Activated B cell treated with CpG ODN at 0.5 μM for 24 hours (primary cell): ENCODE measurements at regions of chr1 and their contacts with region 1.

Region 1: DNA sequence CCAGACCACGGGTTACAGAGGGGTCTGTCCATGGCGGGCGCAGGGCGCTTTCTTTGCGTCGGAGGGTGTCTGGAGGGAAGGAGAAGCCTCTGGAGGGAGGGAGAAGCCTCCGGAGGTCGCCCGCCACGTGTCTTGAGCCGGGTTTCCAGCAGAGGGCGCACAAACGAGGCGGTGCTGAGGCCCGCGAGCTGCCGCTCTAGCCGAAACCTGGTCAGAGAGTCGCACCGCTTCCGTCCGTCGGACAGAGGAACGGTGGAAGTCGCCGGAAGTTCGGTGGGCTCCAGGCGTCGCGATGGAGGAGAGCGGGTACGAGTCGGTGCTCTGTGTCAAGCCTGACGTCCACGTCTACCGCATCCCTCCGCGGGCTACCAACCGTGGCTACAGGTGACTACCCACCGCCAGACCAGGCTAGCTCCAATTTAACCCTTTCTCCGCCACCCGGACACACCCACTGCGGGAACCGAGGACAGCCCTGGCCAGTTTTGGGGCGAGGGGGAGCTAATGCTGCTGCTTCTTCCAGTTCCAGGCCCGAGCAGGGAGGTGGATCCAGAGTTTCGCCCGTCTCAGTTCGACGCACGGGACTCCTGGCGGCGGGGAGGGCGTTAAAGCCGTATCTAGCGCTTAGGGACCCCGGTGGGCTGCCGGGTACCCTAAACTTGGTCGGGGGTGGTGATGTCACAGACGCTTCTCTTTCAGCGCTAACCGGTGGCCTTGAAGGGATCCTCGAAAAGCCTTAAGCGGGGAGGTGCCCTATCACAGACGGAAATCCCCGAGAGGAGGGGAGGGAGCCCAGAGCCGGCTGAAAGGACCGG is at the start of gene NECAP2:
- DNase-seq: peak; percentile 91
- ATAC-seq: peak; percentile 91
- H3K4me3 Mint-ChIP-seq: peak within 1 kb of the TSS; percentile 94
- H3K27ac Mint-ChIP-seq: peak within 1 kb of the TSS; percentile 91
- H3K4me1 Mint-ChIP-seq: peaks cover 30% of the 10 kb centered on the region
- H3K27me3 Mint-ChIP-seq: no peaks in the 10 kb centered on the region
- CTCF ChIP-seq: peak; percentile 92
- total RNA-seq, gene NECAP2: 85.5 and 88.4 TPM in 2 replicates

Region 2: GRCh38 chr1:16155532-16156410 is 284.9 kb before region 1 on chr1 and contains the start of gene EPHA2:
- CTCF ChIA-PET with region 1: no interaction called
- POLR2A ChIA-PET with region 1: no interaction called
- intact Hi-C with region 1: no loop called
- DNase-seq: no peak
- ATAC-seq: peak; percentile 35
- H3K4me3 Mint-ChIP-seq: peak within 1 kb of the TSS; percentile 72
- H3K27ac Mint-ChIP-seq: no peak within 1 kb of the TSS
- H3K4me1 Mint-ChIP-seq: peaks cover 30% of the 10 kb centered on the region
- H3K27me3 Mint-ChIP-seq: peaks cover 15% of the 10 kb centered on the region
- CTCF ChIP-seq: no peak
- total RNA-seq, gene EPHA2: not detected in 2 replicates

Region 3: GRCh38 chr1:16386454-16387113 is 54.1 kb before region 1 on chr1:
- CTCF ChIA-PET with region 1: interaction called, 8 read pairs
- POLR2A ChIA-PET with region 1: interaction called, 8 read pairs
- intact Hi-C with region 1: loop called (anchors 5 kb)
- DNase-seq: no peak
- ATAC-seq: peak; percentile 23
- H3K4me3 Mint-ChIP-seq: peak overlapping the region; percentile 73
- H3K27ac Mint-ChIP-seq: peak overlapping the region; percentile 92
- H3K4me1 Mint-ChIP-seq: peaks cover 79% of the 10 kb centered on the region
- H3K27me3 Mint-ChIP-seq: no peaks in the 10 kb centered on the region
- CTCF ChIP-seq: no peak

Region 4: GRCh38 chr1:16420424-16421118 is 20.1 kb before region 1 on chr1:
- CTCF ChIA-PET with region 1: interaction called, 6 read pairs
- POLR2A ChIA-PET with region 1: interaction called, 11 read pairs
- intact Hi-C with region 1: loop called (anchors 2 kb)
- DNase-seq: no peak
- ATAC-seq: peak; percentile 97
- H3K4me3 Mint-ChIP-seq: peak overlapping the region; percentile 48
- H3K27ac Mint-ChIP-seq: peak overlapping the region; percentile 84
- H3K4me1 Mint-ChIP-seq: peaks cover 31% of the 10 kb centered on the region
- H3K27me3 Mint-ChIP-seq: no peaks in the 10 kb centered on the region
- CTCF ChIP-seq: no peak

Region 5: GRCh38 chr1:16498573-16499413 is 58.1 kb after region 1 on chr1:
- CTCF ChIA-PET with region 1: no interaction called
- POLR2A ChIA-PET with region 1: interaction called, 6 read pairs
- intact Hi-C with region 1: loop called (anchors 10 kb)
- DNase-seq: peak; percentile 91
- ATAC-seq: peak; percentile 96
- H3K4me3 Mint-ChIP-seq: peak overlapping the region; percentile 85
- H3K27ac Mint-ChIP-seq: no peak overlapping the region
- H3K4me1 Mint-ChIP-seq: peaks cover 24% of the 10 kb centered on the region
- H3K27me3 Mint-ChIP-seq: no peaks in the 10 kb centered on the region
- CTCF ChIP-seq: no peak

Region 6: GRCh38 chr1:16613185-16614147 is 172.8 kb after region 1 on chr1 and contains the start of gene NBPF1:
- CTCF ChIA-PET with region 1: interaction called, 4 read pairs
- POLR2A ChIA-PET with region 1: interaction called, 3 read pairs
- intact Hi-C with region 1: loop called (anchors 2 kb)
- DNase-seq: peak; percentile 98
- ATAC-seq: peak; percentile 97
- H3K4me3 Mint-ChIP-seq: no peak within 1 kb of the TSS
- H3K27ac Mint-ChIP-seq: no peak within 1 kb of the TSS
- H3K4me1 Mint-ChIP-seq: no peaks in the 10 kb centered on the region
- H3K27me3 Mint-ChIP-seq: no peaks in the 10 kb centered on the region
- CTCF ChIP-seq: no peak
- total RNA-seq, gene NBPF1: 20.0 and 20.2 TPM in 2 replicates